ENCODE measurements at regions of chr1 and their contacts with region 1.

Region 1: DNA sequence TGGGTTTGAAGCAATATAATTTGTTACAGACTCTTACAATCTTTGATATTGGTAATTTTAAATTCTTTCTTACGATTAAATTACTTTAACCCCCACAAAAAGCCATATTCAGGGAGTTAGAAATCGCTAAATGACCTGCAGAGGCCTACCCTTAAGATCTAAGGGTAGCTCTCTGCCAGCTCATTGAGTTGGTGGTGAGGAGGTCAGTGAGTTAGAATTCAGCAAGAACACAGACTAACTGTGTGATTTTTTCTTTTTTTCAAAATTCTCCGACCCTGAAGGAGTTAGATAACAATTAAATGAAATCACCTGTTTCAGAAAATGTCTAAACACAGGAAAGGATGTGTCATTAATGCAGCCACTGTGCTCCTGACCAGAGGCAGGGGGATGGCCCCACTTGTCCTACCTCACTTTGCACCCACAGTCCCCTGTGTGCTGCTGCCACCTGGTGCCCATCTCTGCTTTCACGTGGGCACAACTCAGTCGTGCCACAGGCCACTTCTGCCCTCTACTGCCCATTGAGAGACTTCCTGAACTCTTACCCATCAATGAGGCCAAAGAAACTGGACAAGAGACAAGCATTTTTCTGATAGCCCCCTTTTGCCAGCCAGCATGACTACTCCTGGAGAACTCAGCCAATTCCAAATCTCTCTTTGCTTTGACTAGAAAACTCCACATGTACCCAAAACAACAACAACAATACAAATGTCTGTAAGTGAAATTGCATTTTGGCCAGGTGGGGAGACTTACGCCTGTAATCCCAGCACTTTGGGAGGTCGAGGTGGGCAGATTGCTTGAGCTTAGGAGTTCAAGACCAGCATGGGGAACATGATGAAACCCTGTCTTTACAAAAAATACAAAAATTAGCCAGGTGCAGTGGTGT is 8.4 kb downstream of the CFAP45 start:
- DNase-seq: peak; percentile 66 to 77
- H3K4me3 ChIP-seq: no peak overlapping the region
- H3K27ac ChIP-seq: no peak overlapping the region
- H3K4me1 ChIP-seq: no peaks in the 10 kb centered on the region
- H3K27me3 ChIP-seq: no peaks in the 10 kb centered on the region
- CTCF ChIP-seq: peak; percentile 99 to 100 (median 100)
- EP300 ChIP-seq: no peak
- POLR2A ChIP-seq: no peak
- RAD21 ChIP-seq: peak; percentile 100

Region 2: DNA sequence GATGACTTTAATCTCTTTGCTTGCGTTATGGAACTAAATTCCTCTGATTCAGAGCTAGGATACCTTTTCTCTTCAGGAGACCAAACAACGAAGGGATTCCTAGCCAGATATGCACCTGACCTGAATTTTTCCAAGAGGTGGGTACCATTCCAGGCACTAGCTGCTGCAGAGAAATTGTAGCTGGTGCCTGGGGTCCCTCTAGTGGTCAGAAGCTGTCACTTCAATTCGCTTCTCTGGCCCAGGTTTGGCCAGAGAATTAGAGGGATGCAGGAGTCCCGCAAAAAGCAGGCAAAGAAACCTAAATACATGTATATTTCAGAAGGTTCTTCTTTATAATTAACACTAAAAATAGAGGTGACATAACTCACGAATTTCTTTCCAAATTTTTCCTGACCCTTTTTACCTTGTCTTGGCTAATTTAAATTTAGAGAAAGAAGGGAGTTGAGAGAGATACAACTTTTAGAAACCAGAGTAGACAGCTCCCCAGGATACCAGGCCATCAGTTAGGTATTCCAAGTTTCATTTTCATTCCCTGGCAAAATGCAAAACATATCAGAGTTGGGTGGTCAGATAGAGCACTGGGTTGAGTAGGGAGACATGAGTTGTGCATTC is 677.3 kb before region 1 on chr1:
- CTCF ChIA-PET with region 1: interaction called, 27 read pairs
- POLR2A ChIA-PET with region 1: no interaction called
- DNase-seq: peak in 1 of 2 experiments; percentile 65
- H3K4me3 ChIP-seq: no peak overlapping the region
- H3K27ac ChIP-seq: no peak overlapping the region
- H3K4me1 ChIP-seq: peaks cover 6 to 14% (median 11%) of the 10 kb centered on the region in 4 experiments
- H3K27me3 ChIP-seq: no peaks in the 10 kb centered on the region
- CTCF ChIP-seq: peak; percentile 77 to 89 (median 88)
- EP300 ChIP-seq: no peak
- POLR2A ChIP-seq: no peak
- RAD21 ChIP-seq: peak; percentile 82 to 85

Region 3: DNA sequence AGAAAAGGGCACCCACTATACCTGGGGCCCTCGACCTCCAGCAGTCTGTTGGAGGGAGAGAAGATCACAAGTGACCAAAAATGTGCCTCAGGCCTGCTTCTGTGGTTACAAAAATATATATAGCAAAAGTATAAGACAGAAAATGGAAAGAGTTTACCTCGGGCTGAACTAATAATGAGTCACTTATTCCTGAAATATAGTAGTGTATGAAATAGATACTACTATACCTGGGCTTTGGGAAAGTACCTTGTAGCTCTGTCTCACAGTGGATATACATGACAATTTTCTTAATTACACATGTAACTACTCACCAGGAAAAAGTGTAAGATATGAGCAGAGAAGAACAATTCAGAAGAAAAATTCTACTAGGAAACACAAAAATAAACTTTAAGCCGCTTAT is 311.2 kb before region 1 on chr1:
- CTCF ChIA-PET with region 1: no interaction called
- POLR2A ChIA-PET with region 1: no interaction called
- DNase-seq: no peak
- H3K4me3 ChIP-seq: no peak overlapping the region
- H3K27ac ChIP-seq: no peak overlapping the region
- H3K4me1 ChIP-seq: no peaks in the 10 kb centered on the region
- H3K27me3 ChIP-seq: no peaks in the 10 kb centered on the region
- CTCF ChIP-seq: no peak
- EP300 ChIP-seq: no peak
- POLR2A ChIP-seq: no peak
- RAD21 ChIP-seq: no peak

Region 4: DNA sequence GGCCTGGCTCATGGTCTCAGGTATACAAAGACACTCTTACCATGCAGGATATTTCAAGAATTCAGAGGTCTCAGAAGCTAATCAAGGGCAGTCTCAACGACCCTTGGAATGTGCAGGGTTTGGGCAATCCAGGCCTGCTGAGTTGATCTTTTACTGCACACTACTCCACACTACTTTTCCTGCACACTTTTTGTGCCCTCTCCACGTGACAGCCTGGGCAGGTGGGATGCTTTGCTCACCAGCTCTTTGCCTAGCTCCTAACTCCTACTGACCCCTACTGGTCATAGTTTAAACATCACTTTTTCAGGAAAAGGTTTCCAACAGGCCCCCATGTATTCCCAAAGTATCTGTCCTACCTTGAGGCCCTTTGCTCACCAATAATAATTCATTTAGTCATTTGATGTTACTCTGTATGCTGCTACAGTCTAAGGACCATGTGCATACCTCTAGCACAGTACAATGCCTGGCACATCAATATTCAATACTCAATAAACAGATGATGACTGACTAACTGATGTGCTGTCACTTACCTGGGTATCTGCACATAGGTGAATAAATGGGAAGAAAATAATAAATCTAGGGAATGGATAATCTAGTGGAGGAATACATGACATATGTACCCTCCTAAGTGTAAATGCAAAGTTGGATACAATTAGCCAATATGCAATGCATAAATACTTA is 101.1 kb before region 1 on chr1:
- CTCF ChIA-PET with region 1: interaction called, 645 read pairs
- POLR2A ChIA-PET with region 1: interaction called, 4 read pairs
- DNase-seq: no peak
- H3K4me3 ChIP-seq: no peak overlapping the region
- H3K27ac ChIP-seq: no peak overlapping the region
- H3K4me1 ChIP-seq: peaks cover 0 to 4% (median 0%) of the 10 kb centered on the region in 4 experiments; a peak in 1 of 7 replicates
- H3K27me3 ChIP-seq: no peaks in the 10 kb centered on the region
- CTCF ChIP-seq: peak; percentile 37 to 80 (median 65)
- EP300 ChIP-seq: no peak
- POLR2A ChIP-seq: no peak
- RAD21 ChIP-seq: peak; percentile 79 to 84

Region 5: GRCh38 chr1:159829273-159829634 is 62.3 kb before region 1 on chr1:
- CTCF ChIA-PET with region 1: interaction called, 175 read pairs
- POLR2A ChIA-PET with region 1: no interaction called
- DNase-seq: peak in 1 of 2 experiments; percentile 67
- H3K4me3 ChIP-seq: no peak overlapping the region
- H3K27ac ChIP-seq: no peak overlapping the region
- H3K4me1 ChIP-seq: peaks cover 0 to 4% (median 2%) of the 10 kb centered on the region in 4 experiments; a peak in 1 of 7 replicates
- H3K27me3 ChIP-seq: peaks cover 0 to 15% (median 3%) of the 10 kb centered on the region in 4 experiments; a peak in 6 of 7 replicates
- CTCF ChIP-seq: peak; percentile 73 to 78 (median 78)
- EP300 ChIP-seq: no peak
- POLR2A ChIP-seq: no peak
- RAD21 ChIP-seq: peak; percentile 43 to 59

Region 6: DNA sequence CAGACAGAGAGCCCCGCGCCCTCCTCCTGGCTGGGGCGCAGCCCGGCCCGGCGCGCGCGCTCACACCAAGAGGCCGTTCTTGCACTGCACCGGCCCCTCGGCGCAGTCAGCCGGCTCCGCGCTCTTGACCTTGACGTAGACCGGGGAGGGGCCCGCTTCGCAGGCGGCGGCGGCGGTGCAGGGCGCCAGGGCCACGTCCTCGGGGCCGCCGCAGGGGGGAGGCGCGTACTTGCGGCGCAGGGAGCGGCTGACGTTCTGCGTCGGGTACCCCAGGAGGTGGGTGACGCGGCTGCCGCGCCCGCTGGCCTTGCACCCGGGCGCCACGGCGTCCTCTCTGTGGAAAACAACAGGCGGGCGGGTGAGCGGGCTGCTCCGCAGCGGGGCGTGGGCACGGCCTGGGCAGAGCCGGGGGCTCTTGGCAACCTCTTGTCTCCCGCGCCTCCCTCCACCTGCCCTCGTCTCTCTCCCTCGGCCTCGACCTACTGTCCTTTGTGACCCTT is 36.8 kb before region 1 on chr1:
- CTCF ChIA-PET with region 1: interaction called, 111 read pairs
- POLR2A ChIA-PET with region 1: no interaction called
- DNase-seq: peak in 1 of 2 experiments; percentile 73
- H3K4me3 ChIP-seq: peak overlapping the region; percentile 38 to 84 (median 53)
- H3K27ac ChIP-seq: no peak overlapping the region
- H3K4me1 ChIP-seq: no peaks in the 10 kb centered on the region
- H3K27me3 ChIP-seq: peaks cover 7 to 33% (median 24%) of the 10 kb centered on the region in 4 experiments
- CTCF ChIP-seq: no peak
- EP300 ChIP-seq: no peak
- POLR2A ChIP-seq: no peak
- RAD21 ChIP-seq: no peak

Region 7: GRCh38 chr1:159924981-159925712 is 33.6 kb after region 1 on chr1 and contains the start of gene TAGLN2:
- CTCF ChIA-PET with region 1: interaction called, 124 read pairs
- POLR2A ChIA-PET with region 1: interaction called, 4 read pairs
- DNase-seq: peak in 1 of 2 experiments; percentile 92
- H3K4me3 ChIP-seq: peak within 1 kb of the TSS; percentile 55 to 63 (median 59)
- H3K27ac ChIP-seq: no peak within 1 kb of the TSS
- H3K4me1 ChIP-seq: peaks cover 5 to 21% (median 16%) of the 10 kb centered on the region in 4 experiments
- H3K27me3 ChIP-seq: peaks cover 0 to 17% (median 8%) of the 10 kb centered on the region in 4 experiments; a peak in 5 of 7 replicates
- CTCF ChIP-seq: no peak; a peak in 1 of 4 replicates
- EP300 ChIP-seq: no peak
- POLR2A ChIP-seq: peak in 1 of 2 experiments; percentile 74; a peak in 2 of 3 replicates
- RAD21 ChIP-seq: peak in 1 of 2 experiments; percentile 16; a peak in 1 of 4 replicates
- total RNA-seq, gene TAGLN2: 86.0 and 93.0 TPM in 2 replicates